ENCODE measurements at regions of chr17 and their contacts with region 1.

Region 1: GRCh38 chr17:8798846-8799569 is at the start of gene MFSD6L:
- DNase-seq: peak; percentile 88
- ATAC-seq: peak; percentile 96
- H3K4me3 Mint-ChIP-seq: peak within 1 kb of the TSS; percentile 81
- H3K27ac Mint-ChIP-seq: peak within 1 kb of the TSS; percentile 27; the same call in 1 of the 2 replicates
- H3K4me1 Mint-ChIP-seq: peaks cover 23% of the 10 kb centered on the region
- H3K27me3 Mint-ChIP-seq: peaks cover 4% of the 10 kb centered on the region; the same call in 1 of the 2 replicates
- CTCF ChIP-seq: no peak
- total RNA-seq, gene MFSD6L: 4.0 to 5.2 TPM (median 4.5 TPM) in 3 replicates

Region 2: DNA sequence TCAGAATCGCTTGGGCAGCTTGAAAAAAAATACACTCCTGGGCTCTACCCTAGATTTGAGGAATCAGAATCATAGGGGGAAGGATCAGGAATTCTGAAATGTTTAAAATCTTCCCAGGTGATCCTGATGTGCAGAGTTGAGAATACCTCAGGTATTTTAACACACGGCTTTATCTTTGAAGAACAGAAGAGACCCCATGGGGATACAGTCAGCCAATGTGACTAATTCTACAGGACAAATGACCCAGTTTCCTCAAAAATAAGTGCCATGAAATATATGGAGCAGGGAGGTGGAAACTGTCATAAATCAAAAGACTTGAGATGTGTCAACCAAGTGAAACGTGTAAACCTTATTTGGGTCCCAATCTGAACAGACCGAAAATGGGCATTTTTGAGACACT is 107.1 kb before region 1 on chr17:
- CTCF ChIA-PET with region 1: no interaction called
- POLR2A ChIA-PET with region 1: no interaction called
- DNase-seq: no peak
- ATAC-seq: no peak
- H3K4me3 Mint-ChIP-seq: no peak overlapping the region
- H3K27ac Mint-ChIP-seq: no peak overlapping the region
- H3K4me1 Mint-ChIP-seq: peaks cover 15% of the 10 kb centered on the region
- H3K27me3 Mint-ChIP-seq: peaks cover 2% of the 10 kb centered on the region; the same call in 1 of the 2 replicates
- CTCF ChIP-seq: no peak

Region 3: DNA sequence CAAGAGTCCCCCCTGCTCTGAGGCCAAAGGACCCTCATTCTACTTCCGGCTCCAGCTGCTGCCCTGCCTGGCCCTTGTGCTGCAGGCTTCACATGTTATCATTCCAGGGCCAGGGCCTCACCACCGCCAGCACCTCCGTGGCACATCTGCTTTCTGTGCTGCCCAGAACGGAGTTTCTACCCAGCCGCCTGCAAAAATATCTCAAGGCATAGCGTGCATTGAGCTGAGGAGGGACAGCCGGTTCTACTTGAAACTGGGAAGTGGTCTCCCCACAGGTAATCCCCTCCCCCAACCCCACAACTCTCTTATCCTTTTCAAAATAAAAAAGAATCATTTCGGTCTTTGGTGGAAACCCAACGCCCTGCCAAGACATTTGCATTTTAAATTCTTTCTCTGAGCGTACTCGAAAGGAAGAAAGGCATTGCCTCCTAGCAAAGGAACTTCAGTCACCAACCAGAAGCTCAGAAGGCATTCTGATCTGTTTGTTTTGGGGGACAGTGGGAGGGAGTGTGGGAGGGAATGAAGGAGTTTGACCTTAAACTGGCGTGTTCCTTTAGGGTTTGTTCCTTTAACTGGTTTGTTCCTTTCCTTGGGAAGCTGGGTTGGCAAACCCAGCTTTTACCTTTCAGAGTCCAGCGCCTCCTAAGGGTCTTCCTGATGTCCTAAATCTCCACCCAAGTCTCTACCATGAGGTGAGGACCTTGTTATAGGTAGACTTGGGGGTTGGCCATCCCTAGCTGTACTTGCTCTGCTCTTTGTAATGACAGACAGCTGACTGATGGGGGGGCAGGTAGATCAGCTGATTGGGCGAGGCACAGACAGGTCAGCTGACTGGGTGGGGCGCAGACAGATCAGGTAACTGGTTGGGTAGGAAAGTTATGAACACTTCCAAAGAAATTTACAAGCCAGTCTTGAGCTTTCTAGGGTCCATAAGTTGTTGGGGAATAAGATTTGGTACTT is 101.9 kb after region 1 on chr17:
- CTCF ChIA-PET with region 1: interaction called, 107 read pairs
- POLR2A ChIA-PET with region 1: interaction called, 5 read pairs
- DNase-seq: no peak
- ATAC-seq: peak; percentile 32; the same call in 1 of the 2 replicates
- H3K4me3 Mint-ChIP-seq: peak overlapping the region; percentile 24
- H3K27ac Mint-ChIP-seq: no peak overlapping the region; the same call in 1 of the 2 replicates
- H3K4me1 Mint-ChIP-seq: peaks cover 22% of the 10 kb centered on the region
- H3K27me3 Mint-ChIP-seq: no peaks in the 10 kb centered on the region; the same call in 1 of the 2 replicates
- CTCF ChIP-seq: no peak

Region 4: GRCh38 chr17:8965394-8966168 is 166.6 kb after region 1 on chr17 and contains the start of gene PIK3R5:
- CTCF ChIA-PET with region 1: interaction called, 12 read pairs
- POLR2A ChIA-PET with region 1: interaction called, 7 read pairs
- DNase-seq: peak; percentile 92
- ATAC-seq: peak; percentile 95
- H3K4me3 Mint-ChIP-seq: peak within 1 kb of the TSS; percentile 70
- H3K27ac Mint-ChIP-seq: no peak within 1 kb of the TSS
- H3K4me1 Mint-ChIP-seq: peaks cover 9% of the 10 kb centered on the region
- H3K27me3 Mint-ChIP-seq: peaks cover 53% of the 10 kb centered on the region
- CTCF ChIP-seq: no peak
- total RNA-seq, gene PIK3R5: 5.9 to 7.5 TPM (median 5.9 TPM) in 3 replicates

Measured in WTC11 (cell line).